ENCODE measurements at regions of chr12 and their contacts with region 1.

Region 1: DNA sequence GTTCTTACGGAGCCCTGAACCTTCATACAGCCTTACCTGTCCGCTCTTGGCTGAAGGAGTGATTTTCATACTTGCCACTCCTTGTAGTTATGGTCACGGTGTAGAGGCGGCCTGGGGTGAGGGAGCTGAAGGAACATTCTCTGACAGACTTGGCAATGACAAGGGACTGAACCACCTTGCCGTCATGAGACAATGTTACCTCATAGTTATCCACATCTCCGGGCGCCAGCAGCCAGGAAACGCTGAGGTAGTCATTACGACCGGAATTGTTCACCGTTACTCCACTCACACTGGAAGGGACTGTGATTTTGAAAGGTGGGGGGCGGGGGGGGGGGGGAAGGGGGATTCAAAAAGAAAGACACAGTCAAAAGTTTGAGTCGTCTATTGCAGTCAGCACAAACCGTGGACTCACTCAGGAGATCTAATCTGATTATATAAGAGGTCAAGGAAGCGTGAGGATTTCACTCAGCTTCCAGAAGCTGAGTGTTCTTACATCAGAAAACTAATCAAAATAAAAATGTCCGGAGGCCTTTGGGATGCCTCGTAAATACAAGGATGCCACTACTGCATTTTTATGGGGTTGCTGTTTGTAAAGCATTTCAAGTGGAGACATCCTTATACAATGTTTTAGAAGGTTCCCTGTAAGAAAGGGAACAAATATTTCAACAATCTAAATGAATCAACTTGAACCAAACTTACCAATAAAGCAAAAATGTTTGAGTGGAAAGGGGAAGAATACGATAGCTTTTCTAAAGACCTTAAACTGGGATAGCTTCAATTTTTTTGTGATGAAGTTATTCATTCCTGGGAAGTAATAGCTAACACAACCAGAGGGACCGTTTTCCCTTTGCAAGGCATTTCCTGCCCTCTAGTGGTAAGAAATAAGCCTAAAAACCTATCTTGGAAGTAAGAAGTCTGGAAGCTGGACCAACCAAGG is 60.6 kb downstream of the PTPRB start:
- DNase-seq: no peak
- ATAC-seq: peak; percentile 60
- H3K4me3 ChIP-seq: no peak overlapping the region
- H3K27ac ChIP-seq: no peak overlapping the region
- H3K4me1 ChIP-seq: no peaks in the 10 kb centered on the region
- H3K27me3 ChIP-seq: no peaks in the 10 kb centered on the region
- CTCF ChIP-seq: peak; percentile 63 to 88 (median 78)
- POLR2A ChIP-seq: no peak

Region 2: DNA sequence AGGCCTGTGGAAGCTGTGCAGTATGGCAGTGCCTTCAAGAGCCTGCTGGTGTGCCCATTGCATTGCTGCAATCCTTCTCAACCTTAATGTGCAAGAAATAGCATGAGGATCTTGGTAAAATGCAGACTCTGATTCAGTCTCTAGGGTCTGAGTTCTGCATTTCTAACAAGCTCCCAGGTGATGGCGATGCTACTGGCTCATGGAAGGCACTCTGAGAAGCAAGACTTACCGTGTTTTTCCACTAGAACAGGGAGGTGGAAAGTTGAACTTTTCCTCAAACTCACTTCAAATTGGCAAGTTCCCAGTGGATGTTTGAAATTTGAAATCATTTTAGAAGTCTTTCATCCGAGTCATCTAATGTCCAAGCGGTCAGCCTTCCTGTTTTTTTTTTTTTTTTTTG is 696.0 kb before region 1 on chr12:
- intact Hi-C with region 1: loop called (anchors 5 kb)
- DNase-seq: no peak
- ATAC-seq: no peak
- H3K4me3 ChIP-seq: no peak overlapping the region
- H3K27ac ChIP-seq: no peak overlapping the region
- H3K4me1 ChIP-seq: peaks cover 8% of the 10 kb centered on the region
- H3K27me3 ChIP-seq: no peaks in the 10 kb centered on the region
- CTCF ChIP-seq: no peak
- POLR2A ChIP-seq: no peak

Region 3: DNA sequence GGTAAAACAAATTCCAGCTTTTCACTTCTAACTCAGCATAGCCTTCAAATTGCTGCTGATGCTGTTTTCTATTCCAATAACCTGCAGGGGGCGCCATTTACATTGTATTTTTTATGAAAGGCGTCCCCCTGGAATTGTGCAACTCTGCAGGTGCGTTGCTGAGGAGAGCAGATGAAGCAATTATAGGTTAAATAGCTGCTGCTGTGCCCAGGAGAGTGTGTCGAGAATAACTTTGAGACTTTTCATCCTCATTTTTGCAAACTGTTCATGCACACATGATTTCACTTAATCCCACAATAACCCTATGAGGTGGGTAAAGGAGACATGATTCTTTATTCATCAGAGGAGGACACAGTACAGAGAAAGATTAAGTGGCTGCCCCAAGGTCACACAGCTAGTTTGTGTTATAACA is 675.9 kb before region 1 on chr12:
- intact Hi-C with region 1: loop called (anchors 5 kb)
- DNase-seq: peak; percentile 78 to 87 (median 81)
- ATAC-seq: peak; percentile 80
- H3K4me3 ChIP-seq: no peak overlapping the region
- H3K27ac ChIP-seq: no peak overlapping the region
- H3K4me1 ChIP-seq: peaks cover 2% of the 10 kb centered on the region
- H3K27me3 ChIP-seq: no peaks in the 10 kb centered on the region
- CTCF ChIP-seq: peak; percentile 56 to 88 (median 78)
- POLR2A ChIP-seq: no peak

Region 4: GRCh38 chr12:70330159-70330558 is 246.5 kb before region 1 on chr12:
- intact Hi-C with region 1: no loop called
- DNase-seq: no peak
- ATAC-seq: no peak
- H3K4me3 ChIP-seq: no peak overlapping the region
- H3K27ac ChIP-seq: no peak overlapping the region
- H3K4me1 ChIP-seq: peaks cover 4% of the 10 kb centered on the region
- H3K27me3 ChIP-seq: no peaks in the 10 kb centered on the region
- CTCF ChIP-seq: no peak
- POLR2A ChIP-seq: no peak